ENCODE measurements at regions of chr10 and their contacts with region 1.

Region 1: GRCh38 chr10:74826142-74827044 is at the start of gene KAT6B:
- DNase-seq: peak; percentile 100
- H3K4me3 Mint-ChIP-seq: peak within 1 kb of the TSS; percentile 89
- H3K27ac Mint-ChIP-seq: peak within 1 kb of the TSS; percentile 91
- H3K4me1 Mint-ChIP-seq: peaks cover 61% of the 10 kb centered on the region
- H3K27me3 Mint-ChIP-seq: no peaks in the 10 kb centered on the region
- total RNA-seq, gene KAT6B: 17.4 to 20.5 TPM

Region 2: DNA sequence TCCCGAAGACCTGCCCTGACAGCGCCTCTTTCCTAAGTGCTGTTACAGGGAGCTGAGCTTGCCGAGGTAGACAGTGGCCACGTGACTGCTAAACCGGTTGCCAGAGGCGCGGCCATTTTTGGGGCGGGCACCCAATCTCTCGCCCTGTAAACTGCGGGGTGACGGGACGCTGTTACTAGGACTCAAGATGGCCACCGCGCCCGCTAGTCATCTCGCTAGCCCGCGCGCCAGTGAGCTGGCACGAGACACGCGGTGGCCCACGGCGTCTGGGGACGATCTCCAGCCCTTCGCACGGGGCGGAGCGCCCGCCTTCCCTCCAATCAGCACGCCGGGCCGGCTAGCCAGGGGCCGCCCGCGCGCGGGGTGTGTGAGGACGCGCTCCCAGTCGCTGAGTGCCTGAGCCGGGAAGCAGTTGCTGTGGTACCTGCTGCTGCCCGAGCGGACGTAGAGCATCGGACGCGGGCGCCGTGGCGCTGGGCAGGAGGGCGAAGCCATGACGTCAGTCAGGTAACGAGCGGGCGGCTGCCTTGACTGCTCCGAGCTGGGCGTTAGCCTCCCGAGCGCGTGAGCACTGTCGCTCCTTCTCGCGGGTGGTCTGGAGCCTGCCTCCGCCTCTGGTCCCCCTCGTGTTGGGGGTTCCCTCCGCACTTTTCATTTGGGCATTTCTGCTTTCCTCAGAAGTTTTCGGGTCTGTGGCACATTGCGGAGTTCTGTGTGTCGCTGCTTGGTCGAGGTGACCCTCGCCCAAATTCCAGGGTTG is 649.8 kb before region 1 on chr10:
- CTCF ChIA-PET with region 1: no interaction called
- POLR2A ChIA-PET with region 1: no interaction called
- intact Hi-C with region 1: loop called (anchors 2 kb)
- DNase-seq: peak; percentile 98
- H3K4me3 Mint-ChIP-seq: peak overlapping the region; percentile 87
- H3K27ac Mint-ChIP-seq: peak overlapping the region; percentile 92
- H3K4me1 Mint-ChIP-seq: peaks cover 35% of the 10 kb centered on the region
- H3K27me3 Mint-ChIP-seq: no peaks in the 10 kb centered on the region

Region 3: GRCh38 chr10:74589226-74589673 is 237.1 kb before region 1 on chr10:
- CTCF ChIA-PET with region 1: no interaction called
- POLR2A ChIA-PET with region 1: no interaction called
- intact Hi-C with region 1: loop called (anchors 1 kb)
- DNase-seq: peak; percentile 91
- H3K4me3 Mint-ChIP-seq: no peak overlapping the region
- H3K27ac Mint-ChIP-seq: peak overlapping the region; percentile 58
- H3K4me1 Mint-ChIP-seq: peaks cover 68% of the 10 kb centered on the region
- H3K27me3 Mint-ChIP-seq: no peaks in the 10 kb centered on the region

Region 4: GRCh38 chr10:74808501-74808900 is 17.9 kb before region 1 on chr10:
- CTCF ChIA-PET with region 1: no interaction called
- POLR2A ChIA-PET with region 1: no interaction called
- intact Hi-C with region 1: no loop called
- DNase-seq: no peak
- H3K4me3 Mint-ChIP-seq: no peak overlapping the region
- H3K27ac Mint-ChIP-seq: no peak overlapping the region
- H3K4me1 Mint-ChIP-seq: no peaks in the 10 kb centered on the region
- H3K27me3 Mint-ChIP-seq: no peaks in the 10 kb centered on the region

Region 5: GRCh38 chr10:74854610-74855009 is 28.2 kb after region 1 on chr10:
- CTCF ChIA-PET with region 1: interaction called, 3 read pairs
- POLR2A ChIA-PET with region 1: interaction called, 3 read pairs
- intact Hi-C with region 1: loop called (anchors 1 kb)
- DNase-seq: no peak
- H3K4me3 Mint-ChIP-seq: no peak overlapping the region
- H3K27ac Mint-ChIP-seq: peak overlapping the region; percentile 38
- H3K4me1 Mint-ChIP-seq: peaks cover 36% of the 10 kb centered on the region
- H3K27me3 Mint-ChIP-seq: no peaks in the 10 kb centered on the region

Region 6: GRCh38 chr10:74977913-74978847 is 151.8 kb after region 1 on chr10:
- CTCF ChIA-PET with region 1: no interaction called
- POLR2A ChIA-PET with region 1: interaction called, 3 read pairs
- intact Hi-C with region 1: loop called (anchors 1 kb)
- DNase-seq: peak; percentile 71
- H3K4me3 Mint-ChIP-seq: no peak overlapping the region
- H3K27ac Mint-ChIP-seq: no peak overlapping the region
- H3K4me1 Mint-ChIP-seq: peaks cover 31% of the 10 kb centered on the region
- H3K27me3 Mint-ChIP-seq: no peaks in the 10 kb centered on the region

Region 7: GRCh38 chr10:75111367-75111906 is 285.0 kb after region 1 on chr10 and contains the start of gene SAMD8:
- CTCF ChIA-PET with region 1: no interaction called
- POLR2A ChIA-PET with region 1: no interaction called
- intact Hi-C with region 1: loop called (anchors 1 kb)
- DNase-seq: peak; percentile 99
- H3K4me3 Mint-ChIP-seq: peak within 1 kb of the TSS; percentile 97
- H3K27ac Mint-ChIP-seq: peak within 1 kb of the TSS; percentile 99
- H3K4me1 Mint-ChIP-seq: peaks cover 52% of the 10 kb centered on the region
- H3K27me3 Mint-ChIP-seq: no peaks in the 10 kb centered on the region
- total RNA-seq, gene SAMD8: 18.5 to 20.5 TPM

Region 8: GRCh38 chr10:75235375-75236177 is 409.2 kb after region 1 on chr10 and contains the start of gene COMTD1:
- CTCF ChIA-PET with region 1: no interaction called
- POLR2A ChIA-PET with region 1: no interaction called
- intact Hi-C with region 1: loop called (anchors 1 kb)
- DNase-seq: peak; percentile 96
- H3K4me3 Mint-ChIP-seq: peak within 1 kb of the TSS; percentile 73
- H3K27ac Mint-ChIP-seq: peak within 1 kb of the TSS; percentile 65
- H3K4me1 Mint-ChIP-seq: peaks cover 21% of the 10 kb centered on the region
- H3K27me3 Mint-ChIP-seq: no peaks in the 10 kb centered on the region
- total RNA-seq, gene COMTD1: 40.0 to 41.3 TPM

Measured in activated CD4-positive, alpha-beta memory T cell treated with anti-CD3 and anti-CD28 coated beads for 36 hours (primary cell).